T-cell (primary cell): ENCODE measurements at regions of chr10 and their contacts with region 1.

Region 1: DNA sequence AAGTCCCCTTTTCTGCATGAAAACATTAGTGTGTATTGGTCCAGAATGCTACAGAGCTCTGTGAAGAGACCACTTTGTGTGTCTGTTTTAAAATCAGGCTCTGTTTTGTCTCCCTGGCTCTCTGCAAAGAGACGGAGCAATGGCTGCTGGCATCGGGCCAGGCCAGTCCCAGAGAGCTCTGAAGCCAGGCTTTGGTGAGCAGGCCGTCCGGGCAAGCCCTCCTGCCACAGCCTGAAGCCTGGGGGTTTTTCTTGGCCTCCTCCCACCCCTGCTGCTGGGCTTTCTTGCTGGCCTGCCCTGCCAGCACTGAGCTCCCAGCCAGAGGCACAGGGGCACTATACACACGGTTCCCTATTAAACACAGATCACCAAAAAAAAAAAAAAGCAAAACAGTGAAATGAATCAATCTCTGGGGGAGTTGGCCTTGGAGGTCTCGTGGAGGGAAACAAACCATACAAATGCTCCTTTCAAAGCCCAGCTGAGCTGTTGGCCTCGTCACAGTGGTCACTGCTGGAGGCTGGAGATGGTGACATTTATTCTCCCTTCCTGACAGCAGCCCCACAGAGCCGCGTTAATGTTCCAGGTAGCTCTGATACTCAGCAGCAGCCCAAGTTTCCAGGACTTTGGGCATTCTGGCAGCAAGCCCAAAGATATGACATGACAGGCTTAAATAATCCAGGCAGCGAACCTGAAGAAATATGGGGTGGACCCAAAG is 237.2 kb downstream of the TCF7L2 start:
- DNase-seq: no peak
- ATAC-seq: no peak
- H3K4me3 ChIP-seq: no peak overlapping the region
- H3K4me3 Mint-ChIP-seq: no peak overlapping the region
- H3K27ac ChIP-seq: no peak overlapping the region
- H3K27ac Mint-ChIP-seq: no peak overlapping the region
- H3K4me1 ChIP-seq: no peaks in the 10 kb centered on the region
- H3K4me1 Mint-ChIP-seq: no peaks in the 10 kb centered on the region
- H3K27me3 ChIP-seq: peaks cover 0 to 4% of the 10 kb centered on the region in 2 experiments
- H3K27me3 Mint-ChIP-seq: peaks cover 0 to 7% of the 10 kb centered on the region in 2 donors

Region 2: DNA sequence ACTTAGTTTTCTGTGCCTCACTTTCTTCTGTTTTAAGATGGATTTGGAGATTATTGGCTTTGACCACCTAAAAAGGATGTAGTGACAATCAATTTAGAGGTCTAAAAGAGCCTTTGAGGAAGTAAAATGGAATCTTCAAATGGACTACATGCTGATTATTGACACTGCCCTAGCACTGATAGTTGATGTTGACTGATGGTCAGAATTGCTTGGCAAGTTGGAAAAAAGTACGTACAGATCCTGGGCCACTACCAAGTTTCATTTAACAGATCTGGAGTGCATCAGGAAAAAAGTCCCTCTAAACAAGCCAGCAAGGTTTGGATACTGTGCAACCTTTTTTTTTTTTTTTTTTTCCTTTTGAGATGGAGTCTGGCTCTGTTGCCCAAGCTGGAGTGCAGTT is 156.1 kb before region 1 on chr10:
- CTCF ChIA-PET with region 1: interaction called in 1 of 2 experiments, 10 read pairs
- POLR2A ChIA-PET with region 1: no interaction called
- DNase-seq: no peak
- ATAC-seq: no peak
- H3K4me3 ChIP-seq: no peak overlapping the region
- H3K4me3 Mint-ChIP-seq: no peak overlapping the region
- H3K27ac ChIP-seq: no peak overlapping the region
- H3K27ac Mint-ChIP-seq: no peak overlapping the region
- H3K4me1 ChIP-seq: peaks cover 0 to 7% of the 10 kb centered on the region in 2 experiments
- H3K4me1 Mint-ChIP-seq: peaks cover 0 to 12% (median 2%) of the 10 kb centered on the region in 3 donors
- H3K27me3 ChIP-seq: peaks cover 0 to 4% of the 10 kb centered on the region in 2 experiments
- H3K27me3 Mint-ChIP-seq: peaks cover 6 to 14% of the 10 kb centered on the region in 2 donors

Region 3: GRCh38 chr10:113199459-113199858 is 12.2 kb after region 1 on chr10:
- CTCF ChIA-PET with region 1: no interaction called
- POLR2A ChIA-PET with region 1: no interaction called
- DNase-seq: no peak
- ATAC-seq: no peak
- H3K4me3 ChIP-seq: no peak overlapping the region
- H3K4me3 Mint-ChIP-seq: no peak overlapping the region
- H3K27ac ChIP-seq: no peak overlapping the region
- H3K27ac Mint-ChIP-seq: no peak overlapping the region
- H3K4me1 ChIP-seq: no peaks in the 10 kb centered on the region
- H3K4me1 Mint-ChIP-seq: no peaks in the 10 kb centered on the region
- H3K27me3 ChIP-seq: peaks cover 0 to 7% of the 10 kb centered on the region in 2 experiments
- H3K27me3 Mint-ChIP-seq: peaks cover 0 to 11% of the 10 kb centered on the region in 2 donors

Region 4: GRCh38 chr10:113661332-113661731 is 474.1 kb after region 1 on chr10:
- CTCF ChIA-PET with region 1: no interaction called
- POLR2A ChIA-PET with region 1: no interaction called
- DNase-seq: no peak
- ATAC-seq: no peak
- H3K4me3 ChIP-seq: no peak overlapping the region
- H3K4me3 Mint-ChIP-seq: no peak overlapping the region
- H3K27ac ChIP-seq: no peak overlapping the region
- H3K27ac Mint-ChIP-seq: no peak overlapping the region
- H3K4me1 ChIP-seq: no peaks in the 10 kb centered on the region
- H3K4me1 Mint-ChIP-seq: no peaks in the 10 kb centered on the region
- H3K27me3 ChIP-seq: no peaks in the 10 kb centered on the region
- H3K27me3 Mint-ChIP-seq: peaks cover 4 to 8% of the 10 kb centered on the region in 2 donors